Activated naive CD8-positive, alpha-beta T cell treated with anti-CD3 and anti-CD28 coated beads, Interleukin-2, amount 10 ng/mL, durations not matched to agents 7 days and 5 days (primary cell): ENCODE measurements at regions of chr2 and their contacts with region 1.

Region 1: GRCh38 chr2:55050133-55050994 is at the start of gene RTN4:
- DNase-seq: peak; percentile 95
- ATAC-seq: peak; percentile 92
- H3K4me3 Mint-ChIP-seq: peak within 1 kb of the TSS; percentile 100
- H3K27ac Mint-ChIP-seq: peak within 1 kb of the TSS; percentile 100
- H3K4me1 Mint-ChIP-seq: peaks cover 41% of the 10 kb centered on the region
- H3K27me3 Mint-ChIP-seq: no peaks in the 10 kb centered on the region
- total RNA-seq, gene RTN4: 82.2 to 88.2 TPM

Region 2: GRCh38 chr2:55010149-55010591 is 40.2 kb before region 1 on chr2:
- POLR2A ChIA-PET with region 1: interaction called, 25 read pairs
- DNase-seq: peak; percentile 44
- ATAC-seq: peak; percentile 95
- H3K4me3 Mint-ChIP-seq: peak overlapping the region; percentile 91
- H3K27ac Mint-ChIP-seq: peak overlapping the region; percentile 92
- H3K4me1 Mint-ChIP-seq: peaks cover 48% of the 10 kb centered on the region
- H3K27me3 Mint-ChIP-seq: no peaks in the 10 kb centered on the region

Region 3: DNA sequence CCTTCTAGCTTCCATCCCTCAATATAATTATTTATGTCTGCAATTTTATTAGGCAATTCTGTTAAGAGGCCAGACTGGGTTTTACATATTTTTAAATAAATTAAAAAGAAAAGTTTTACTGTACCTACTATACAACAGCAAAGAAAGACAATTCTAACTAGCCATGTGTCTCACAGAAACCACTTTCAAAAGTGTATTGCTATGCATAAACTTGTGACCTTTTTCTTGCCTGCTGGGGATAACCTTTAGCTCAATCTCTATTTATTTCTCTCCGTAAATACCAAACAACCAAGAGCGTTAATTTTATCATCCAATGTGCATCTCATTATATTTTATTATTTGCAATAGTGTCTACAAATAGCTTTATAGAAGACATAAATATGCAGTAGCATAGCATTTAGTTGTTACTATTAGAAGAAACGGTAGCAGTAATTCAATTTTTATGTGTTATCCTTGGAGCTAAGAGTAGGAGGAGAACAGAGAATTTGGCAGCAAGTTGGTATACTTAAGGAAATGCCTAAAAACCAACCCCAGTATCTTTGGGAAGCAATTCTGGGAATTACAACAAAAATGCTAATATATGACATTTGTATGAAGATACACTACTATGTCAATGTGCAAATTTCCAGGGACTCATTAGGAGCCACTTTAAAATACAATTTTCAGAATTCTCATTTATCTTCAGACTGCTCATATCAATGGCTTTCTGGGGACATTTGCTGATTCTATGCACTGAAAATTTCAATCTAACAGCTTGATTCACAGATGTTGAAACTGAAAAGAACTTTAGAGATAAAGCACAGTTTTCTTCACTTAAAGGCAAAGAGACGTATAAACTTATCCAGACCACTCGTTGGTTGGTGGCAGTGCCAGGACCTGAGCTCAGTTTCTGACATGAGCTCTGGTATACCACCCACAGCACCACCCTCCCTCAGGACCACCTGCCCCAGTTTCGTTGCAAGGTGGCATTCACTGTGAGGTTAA is 22.9 kb after region 1 on chr2:
- POLR2A ChIA-PET with region 1: no interaction called
- DNase-seq: no peak
- ATAC-seq: no peak
- H3K4me3 Mint-ChIP-seq: no peak overlapping the region
- H3K27ac Mint-ChIP-seq: no peak overlapping the region
- H3K4me1 Mint-ChIP-seq: no peaks in the 10 kb centered on the region
- H3K27me3 Mint-ChIP-seq: peaks cover 4% of the 10 kb centered on the region

Region 4: DNA sequence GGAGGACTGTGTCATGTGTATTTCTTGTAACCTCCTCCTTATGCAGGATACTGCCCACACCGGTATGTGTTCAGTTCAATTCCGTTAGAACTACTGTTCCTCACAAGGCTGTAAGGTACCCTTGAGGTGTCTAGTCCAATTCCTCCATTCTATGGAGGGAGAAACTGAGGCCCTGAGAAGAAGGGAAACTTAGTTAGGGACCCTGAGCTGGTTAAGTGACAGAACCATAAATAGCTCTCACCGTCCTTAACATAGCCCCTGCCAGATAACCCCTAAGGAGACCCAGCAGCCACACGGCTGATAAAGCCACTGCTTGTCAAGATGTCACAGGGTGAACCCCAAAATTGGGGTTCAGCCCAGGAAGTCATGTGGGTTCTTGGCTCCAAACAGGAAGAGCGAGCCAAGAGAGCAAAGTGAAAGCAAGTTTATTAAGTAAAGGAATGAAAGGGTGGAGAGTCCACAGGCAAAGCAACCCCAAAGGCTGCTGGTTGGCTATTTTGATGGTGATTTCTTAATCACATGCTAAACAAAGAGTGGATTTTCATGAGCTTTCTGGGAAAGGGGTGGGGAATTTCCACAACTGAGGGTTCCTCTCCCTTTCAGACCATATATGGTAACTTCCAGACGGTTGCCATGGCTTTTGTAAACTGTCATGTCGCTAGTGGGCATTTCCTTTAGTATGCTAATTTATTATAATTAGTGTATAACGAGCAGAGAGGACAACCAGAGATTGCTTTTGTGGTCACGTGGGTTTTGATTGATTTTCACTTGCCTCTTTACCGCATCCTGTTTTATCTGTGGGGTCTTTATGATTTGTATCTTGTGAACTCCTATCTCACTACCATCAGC is 83.3 kb after region 1 on chr2:
- POLR2A ChIA-PET with region 1: interaction called, 17 read pairs
- DNase-seq: peak; percentile 48
- ATAC-seq: peak; percentile 93
- H3K4me3 Mint-ChIP-seq: peak overlapping the region; percentile 78
- H3K27ac Mint-ChIP-seq: peak overlapping the region; percentile 95
- H3K4me1 Mint-ChIP-seq: peaks cover 14% of the 10 kb centered on the region
- H3K27me3 Mint-ChIP-seq: no peaks in the 10 kb centered on the region

Region 5: GRCh38 chr2:55309446-55309845 is 259.1 kb after region 1 on chr2:
- POLR2A ChIA-PET with region 1: no interaction called
- DNase-seq: no peak
- ATAC-seq: no peak
- H3K4me3 Mint-ChIP-seq: no peak overlapping the region
- H3K27ac Mint-ChIP-seq: no peak overlapping the region
- H3K4me1 Mint-ChIP-seq: peaks cover 5% of the 10 kb centered on the region
- H3K27me3 Mint-ChIP-seq: no peaks in the 10 kb centered on the region